Gastrocnemius medialis (tissue), 4 donors: ENCODE measurements at regions of chr9 and their contacts with region 1.

Region 1: GRCh38 chr9:120531683-120532300 is 48.2 kb downstream of the CDK5RAP2 start:
- DNase-seq: peak in 1 of 2 donors; percentile 50
- ATAC-seq: peak; percentile 51
- H3K4me3 ChIP-seq: no peak overlapping the region
- H3K27ac ChIP-seq: peak overlapping the region; percentile 79 to 93 (median 88)
- H3K4me1 ChIP-seq: peaks cover 19 to 20% of the 10 kb centered on the region in 2 donors
- H3K27me3 ChIP-seq: no peaks in the 10 kb centered on the region
- CTCF ChIP-seq: peak in 2 of 5 experiments; percentile 27 to 29
- POLR2A ChIP-seq: no peak

Region 2: DNA sequence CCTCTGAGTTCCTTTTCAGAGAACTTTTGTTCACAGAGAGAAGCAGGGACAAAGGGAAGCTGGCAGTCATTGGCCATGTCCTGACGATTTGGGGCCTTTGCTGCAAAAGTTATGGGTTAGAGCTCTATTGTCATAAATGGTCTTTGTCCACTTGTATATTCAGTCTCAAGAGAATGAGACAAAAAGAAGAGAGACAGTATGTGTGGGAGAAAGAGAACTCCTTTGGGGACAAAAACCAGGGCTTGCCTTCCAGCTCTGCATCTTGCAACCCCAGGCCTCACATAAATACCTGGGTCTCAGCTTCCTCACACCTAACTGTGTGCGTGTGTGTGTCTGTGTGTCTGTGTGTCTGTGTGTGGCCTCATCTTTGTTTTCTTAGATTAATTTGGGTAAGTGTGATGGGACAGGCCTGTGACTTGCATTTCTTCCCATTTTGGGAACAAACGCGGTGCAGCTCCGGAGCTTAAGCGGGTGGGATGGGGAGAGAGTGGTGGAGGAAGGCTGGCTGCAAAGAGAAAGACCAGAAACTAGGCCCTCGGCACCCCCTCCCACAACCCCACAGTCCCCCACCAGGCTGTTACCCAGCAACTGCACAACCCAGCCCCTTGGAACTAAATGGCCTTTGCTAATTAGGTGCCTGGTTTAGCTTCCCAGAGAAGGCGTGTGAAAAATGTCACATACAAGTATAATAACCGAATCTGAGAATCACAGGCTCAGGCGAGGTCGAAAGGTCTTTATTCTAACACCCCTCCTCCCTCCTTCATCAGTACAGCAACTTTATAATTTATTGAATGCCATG is 328.7 kb before region 1 on chr9:
- in situ Hi-C with region 1: no loop called
- intact Hi-C with region 1: no loop called
- DNase-seq: no peak
- ATAC-seq: no peak
- H3K4me3 ChIP-seq: no peak overlapping the region
- H3K27ac ChIP-seq: no peak overlapping the region
- H3K4me1 ChIP-seq: no peaks in the 10 kb centered on the region
- H3K27me3 ChIP-seq: no peaks in the 10 kb centered on the region
- CTCF ChIP-seq: no peak
- POLR2A ChIP-seq: no peak

Region 3: GRCh38 chr9:120265791-120266190 is 266.0 kb before region 1 on chr9:
- in situ Hi-C with region 1: no loop called
- intact Hi-C with region 1: loop called (anchors 5 kb)
- DNase-seq: peak; percentile 83 to 89
- ATAC-seq: peak; percentile 98 to 99
- H3K4me3 ChIP-seq: no peak overlapping the region
- H3K27ac ChIP-seq: peak overlapping the region; percentile 64 to 80 (median 70)
- H3K4me1 ChIP-seq: peaks cover 15 to 21% of the 10 kb centered on the region in 2 donors
- H3K27me3 ChIP-seq: no peaks in the 10 kb centered on the region
- CTCF ChIP-seq: no peak
- POLR2A ChIP-seq: no peak

Region 4: GRCh38 chr9:120412425-120412951 is 119.3 kb before region 1 on chr9:
- in situ Hi-C with region 1: no loop called
- intact Hi-C with region 1: loop called (anchors 5 kb)
- DNase-seq: no peak
- ATAC-seq: peak; percentile 80 to 81
- H3K4me3 ChIP-seq: no peak overlapping the region
- H3K27ac ChIP-seq: peak overlapping the region in 2 of 4 donors; percentile 3 to 28
- H3K4me1 ChIP-seq: peaks cover 15 to 20% of the 10 kb centered on the region in 2 donors
- H3K27me3 ChIP-seq: no peaks in the 10 kb centered on the region
- CTCF ChIP-seq: no peak
- POLR2A ChIP-seq: no peak

Region 5: DNA sequence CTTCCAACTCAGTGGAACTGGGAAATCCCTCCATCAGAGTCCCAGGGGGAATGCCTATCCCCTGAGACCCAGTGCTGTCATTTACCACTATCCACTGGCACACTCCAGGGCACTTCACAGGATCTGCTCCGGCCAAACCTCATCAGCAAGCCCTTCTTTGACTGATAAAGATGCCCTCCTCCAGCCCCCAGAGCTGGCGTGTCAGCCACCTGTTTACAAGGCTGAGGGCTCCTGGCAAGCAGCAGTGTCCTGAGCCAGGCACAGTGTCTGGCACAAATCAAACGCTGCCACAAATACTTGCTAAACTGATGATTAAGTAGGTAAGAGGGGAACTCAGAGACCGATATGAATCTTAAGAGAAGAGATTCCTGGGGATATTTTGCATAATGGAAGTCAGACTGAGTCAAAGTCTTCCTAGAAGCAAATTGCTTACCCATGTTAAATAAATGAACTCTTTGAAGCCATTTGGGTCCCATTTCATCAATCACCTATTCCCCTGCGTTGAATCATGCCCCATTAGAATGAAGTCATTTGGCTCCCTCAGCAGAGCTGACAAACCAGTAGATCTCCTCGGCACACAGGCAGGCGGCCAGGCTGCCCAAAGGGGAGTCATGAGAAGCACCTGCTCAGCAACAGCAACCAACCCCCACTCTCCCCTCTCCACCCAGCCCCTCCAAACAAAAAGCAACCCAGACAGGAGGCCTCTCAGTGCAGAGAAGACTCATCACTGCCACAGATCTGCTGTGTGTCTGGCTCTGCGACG is 49.2 kb before region 1 on chr9:
- in situ Hi-C with region 1: no loop called
- intact Hi-C with region 1: loop called (anchors 1 kb)
- DNase-seq: peak; percentile 23 to 45
- ATAC-seq: no peak
- H3K4me3 ChIP-seq: no peak overlapping the region
- H3K27ac ChIP-seq: peak overlapping the region; percentile 84 to 89 (median 86)
- H3K4me1 ChIP-seq: peaks cover 40 to 42% of the 10 kb centered on the region in 2 donors
- H3K27me3 ChIP-seq: no peaks in the 10 kb centered on the region
- CTCF ChIP-seq: no peak
- POLR2A ChIP-seq: no peak

Region 6: DNA sequence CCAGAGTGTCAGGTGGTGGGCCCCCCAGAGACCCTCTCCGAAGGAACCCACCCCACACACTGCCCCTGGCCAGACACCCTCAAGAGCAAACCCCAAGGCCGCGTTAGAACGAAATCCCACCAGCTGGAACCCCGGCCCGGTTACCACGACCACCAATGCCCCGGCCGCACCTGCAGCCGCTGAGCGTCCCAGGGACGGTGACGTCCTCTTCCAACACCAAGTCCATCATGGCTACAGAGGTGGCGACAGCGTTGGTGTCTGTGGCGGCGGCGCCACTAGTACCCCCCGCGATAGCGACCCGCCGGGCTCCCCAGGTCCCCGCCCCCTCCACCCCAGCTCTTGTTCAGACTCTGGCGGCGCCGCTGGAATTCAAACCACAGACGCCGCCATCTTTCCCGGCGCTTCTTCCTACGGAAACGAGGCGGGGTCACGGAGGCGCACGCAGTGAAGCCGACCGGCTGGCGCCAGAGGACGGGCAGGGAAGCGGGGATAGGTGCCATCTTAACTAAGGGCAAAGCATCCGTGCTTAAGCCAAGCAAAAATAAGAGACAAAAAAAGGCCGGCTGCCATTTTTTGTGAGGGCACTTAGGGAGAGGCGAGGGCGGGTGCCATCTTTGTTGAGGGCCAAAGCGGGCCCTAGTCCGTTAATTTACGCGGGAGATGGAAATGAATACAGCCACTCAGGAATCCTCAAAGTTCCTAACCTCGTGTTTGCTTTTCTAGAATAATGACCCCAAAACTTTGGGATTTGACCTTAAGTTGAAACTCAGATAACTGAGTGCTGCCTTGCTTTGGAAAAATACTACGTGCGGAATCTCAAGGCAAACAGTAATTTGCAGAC is 48.2 kb after region 1 on chr9 and contains the start of gene CDK5RAP2:
- in situ Hi-C with region 1: no loop called
- intact Hi-C with region 1: loop called (anchors 2 kb)
- DNase-seq: peak; percentile 93 to 95
- ATAC-seq: peak; percentile 84 to 92
- H3K4me3 ChIP-seq: peak within 1 kb of the TSS; percentile 89 to 98 (median 95)
- H3K27ac ChIP-seq: peak within 1 kb of the TSS; percentile 88 to 95 (median 89)
- H3K4me1 ChIP-seq: peaks cover 24% of the 10 kb centered on the region in 2 donors
- H3K27me3 ChIP-seq: no peaks in the 10 kb centered on the region
- CTCF ChIP-seq: no peak
- POLR2A ChIP-seq: peak; percentile 51 to 56
- total RNA-seq, gene CDK5RAP2: 57.4 to 86.3 (median 70.3) TPM